HepG2 (cell line): ENCODE measurements at regions of chr2 and their contacts with region 1.

Region 1: GRCh38 chr2:77778917-77779316 is 256.7 kb upstream of the LRRTM4 start:
- DNase-seq: no peak
- ATAC-seq: no peak
- H3K4me3 ChIP-seq: no peak overlapping the region
- H3K27ac ChIP-seq: no peak overlapping the region
- H3K4me1 ChIP-seq: no peaks in the 10 kb centered on the region
- H3K27me3 ChIP-seq: no peaks in the 10 kb centered on the region; a peak in 1 of 5 replicates
- CTCF ChIP-seq: no peak
- EP300 ChIP-seq: no peak
- POLR2A ChIP-seq: no peak
- RAD21 ChIP-seq: no peak

Region 2: DNA sequence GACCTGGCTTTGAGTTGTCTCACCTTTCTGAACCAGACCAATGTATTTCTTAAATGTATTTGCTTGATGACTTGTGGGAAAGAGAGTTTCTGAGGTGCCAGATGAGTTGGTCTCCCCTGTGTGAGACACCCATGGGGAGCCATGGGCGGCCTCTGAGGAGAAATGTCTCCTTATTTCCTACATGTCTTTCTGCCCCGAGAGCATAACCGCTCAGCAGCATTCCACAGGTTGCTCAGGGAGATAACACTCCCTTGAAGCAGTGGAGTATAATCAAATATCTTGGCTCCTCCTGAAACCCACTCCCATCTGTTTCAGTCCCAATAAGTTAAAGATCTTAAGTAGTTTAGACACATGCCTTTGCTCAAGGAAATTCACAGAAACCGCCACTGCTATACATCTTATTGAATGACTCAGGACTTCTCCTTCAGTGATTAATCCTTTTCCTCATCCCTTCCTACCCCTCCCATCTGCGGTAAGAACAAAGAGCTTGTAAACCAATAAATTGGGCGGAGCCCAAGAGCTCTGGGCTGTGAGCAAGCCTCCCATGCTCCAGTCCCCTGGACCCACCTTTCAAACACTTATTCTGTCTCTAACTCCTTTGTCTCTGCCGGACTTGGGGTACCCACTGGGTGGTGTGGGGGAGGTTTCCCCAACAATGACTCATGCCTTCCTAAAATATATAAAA is 28.8 kb after region 1 on chr2:
- CTCF ChIA-PET with region 1: no interaction called
- POLR2A ChIA-PET with region 1: no interaction called
- in situ Hi-C with region 1: no loop called
- intact Hi-C with region 1: loop called (anchors 1 kb)
- DNase-seq: no peak
- ATAC-seq: no peak
- H3K4me3 ChIP-seq: no peak overlapping the region
- H3K27ac ChIP-seq: no peak overlapping the region
- H3K4me1 ChIP-seq: no peaks in the 10 kb centered on the region
- H3K27me3 ChIP-seq: no peaks in the 10 kb centered on the region
- CTCF ChIP-seq: no peak
- EP300 ChIP-seq: no peak
- POLR2A ChIP-seq: no peak
- RAD21 ChIP-seq: no peak